Mucosa of descending colon (tissue), 3 donors: ENCODE measurements at regions of chr12 and their contacts with region 1.

Region 1: GRCh38 chr12:121334513-121335343 is 17.5 kb downstream of the ANAPC5 start:
- DNase-seq: peak in 1 of 3 donors; percentile 44
- ATAC-seq: peak; percentile 97
- H3K4me3 ChIP-seq: no peak overlapping the region
- H3K4me1 ChIP-seq: no peaks in the 10 kb centered on the region
- CTCF ChIP-seq: peak; percentile 76

Region 2: GRCh38 chr12:121443193-121443870 is 108.6 kb after region 1 on chr12:
- intact Hi-C with region 1: loop called (anchors 5 to 10 kb)
- DNase-seq: peak; percentile 83 to 92 (median 91)
- ATAC-seq: peak; percentile 94
- H3K4me3 ChIP-seq: no peak overlapping the region
- H3K4me1 ChIP-seq: peaks cover 13% of the 10 kb centered on the region
- CTCF ChIP-seq: peak; percentile 79

Region 3: GRCh38 chr12:121872546-121873215 is 538.0 kb after region 1 on chr12:
- intact Hi-C with region 1: no loop called
- DNase-seq: peak; percentile 55 to 62 (median 61)
- ATAC-seq: peak; percentile 75
- H3K4me3 ChIP-seq: no peak overlapping the region
- H3K4me1 ChIP-seq: peaks cover 2% of the 10 kb centered on the region
- CTCF ChIP-seq: no peak